CD8-positive, alpha-beta T cell (primary cell): ENCODE measurements at regions of chr18 and their contacts with region 1.

Region 1: DNA sequence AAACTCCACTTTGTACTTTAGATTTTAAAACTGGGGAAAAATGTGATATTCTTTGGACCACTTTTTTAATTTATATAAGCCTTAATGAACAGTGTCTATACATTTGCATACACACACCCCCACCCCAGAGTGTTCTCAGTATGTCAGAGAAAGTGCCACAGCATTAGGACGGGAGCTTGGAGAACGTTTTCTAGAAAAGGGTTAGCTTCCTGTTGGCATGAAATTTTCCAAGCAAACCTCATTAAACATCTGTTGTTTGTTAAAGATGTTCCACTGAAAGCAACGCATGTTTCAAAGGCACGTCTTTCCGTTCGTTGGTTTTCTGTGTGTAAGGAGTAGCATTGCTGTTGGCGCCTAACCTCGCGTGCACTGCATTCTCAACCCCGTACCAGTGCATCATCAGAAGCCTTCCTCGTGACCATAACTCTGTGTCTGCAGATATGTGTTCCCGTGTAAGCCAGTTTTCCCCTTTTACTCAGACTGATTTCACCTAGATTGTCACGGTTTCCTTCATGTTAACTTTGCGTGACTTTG is 228.5 kb downstream of the ALPK2 start:
- DNase-seq: no peak
- ATAC-seq: no peak
- H3K4me3 ChIP-seq: no peak overlapping the region
- H3K4me3 Mint-ChIP-seq: no peak overlapping the region
- H3K27ac ChIP-seq: no peak overlapping the region
- H3K27ac Mint-ChIP-seq: no peak overlapping the region
- H3K4me1 ChIP-seq: peaks cover 8% of the 10 kb centered on the region
- H3K4me1 Mint-ChIP-seq: peaks cover 12% of the 10 kb centered on the region
- H3K27me3 ChIP-seq: no peaks in the 10 kb centered on the region
- H3K27me3 Mint-ChIP-seq: peaks cover 2% of the 10 kb centered on the region
- CTCF ChIP-seq: no peak

Region 2: GRCh38 chr18:58386780-58387179 is 13.6 kb before region 1 on chr18:
- CTCF ChIA-PET with region 1: no interaction called
- POLR2A ChIA-PET with region 1: no interaction called
- intact Hi-C with region 1: no loop called
- DNase-seq: peak in 1 of 9 experiments; percentile 35
- ATAC-seq: no peak
- H3K4me3 ChIP-seq: no peak overlapping the region
- H3K4me3 Mint-ChIP-seq: no peak overlapping the region
- H3K27ac ChIP-seq: no peak overlapping the region
- H3K27ac Mint-ChIP-seq: no peak overlapping the region
- H3K4me1 ChIP-seq: no peaks in the 10 kb centered on the region
- H3K4me1 Mint-ChIP-seq: no peaks in the 10 kb centered on the region
- H3K27me3 ChIP-seq: no peaks in the 10 kb centered on the region
- H3K27me3 Mint-ChIP-seq: no peaks in the 10 kb centered on the region
- CTCF ChIP-seq: no peak

Region 3: DNA sequence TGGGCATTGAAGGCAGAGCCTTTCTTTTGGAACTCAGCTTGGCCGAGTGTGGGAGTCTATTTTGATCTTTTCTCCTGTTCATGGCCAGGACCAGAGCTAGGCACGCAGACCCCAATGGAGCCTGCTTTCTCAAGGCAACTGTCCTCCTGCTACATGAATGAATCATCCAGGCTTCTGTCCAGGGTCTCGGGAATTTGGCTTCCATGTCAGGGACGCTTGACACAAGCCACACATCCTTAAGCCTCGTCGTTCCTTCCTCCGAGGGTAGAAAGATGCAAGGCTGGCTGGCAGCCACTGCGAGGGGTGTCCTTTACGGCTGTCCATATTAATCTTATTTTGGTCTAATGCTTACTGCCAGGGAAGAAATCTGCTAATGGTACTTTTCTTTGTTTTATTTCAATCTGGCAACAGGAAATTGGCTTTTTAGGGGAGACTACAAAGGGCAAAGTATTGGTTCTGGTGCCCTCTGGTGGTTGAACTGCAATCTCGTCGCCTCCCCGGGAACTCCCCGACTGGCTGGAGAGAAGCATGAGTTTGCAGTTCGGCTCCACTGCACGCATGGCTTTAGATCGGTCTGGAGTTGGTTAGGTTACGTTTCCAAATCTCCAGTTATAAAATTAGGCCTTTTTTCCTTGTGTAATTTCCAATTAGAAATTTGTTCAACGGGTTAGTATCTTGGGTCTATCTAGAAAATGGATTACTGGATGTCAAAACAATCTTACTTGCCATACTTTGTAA is 93.3 kb after region 1 on chr18:
- CTCF ChIA-PET with region 1: no interaction called
- POLR2A ChIA-PET with region 1: no interaction called
- intact Hi-C with region 1: loop called (anchors 1 to 2 kb)
- DNase-seq: peak; percentile 26 to 78 (median 66)
- ATAC-seq: peak; percentile 85
- H3K4me3 ChIP-seq: no peak overlapping the region
- H3K4me3 Mint-ChIP-seq: no peak overlapping the region
- H3K27ac ChIP-seq: no peak overlapping the region
- H3K27ac Mint-ChIP-seq: no peak overlapping the region
- H3K4me1 ChIP-seq: no peaks in the 10 kb centered on the region
- H3K4me1 Mint-ChIP-seq: peaks cover 8% of the 10 kb centered on the region
- H3K27me3 ChIP-seq: no peaks in the 10 kb centered on the region
- H3K27me3 Mint-ChIP-seq: peaks cover 32% of the 10 kb centered on the region
- CTCF ChIP-seq: peak; percentile 71